Naive thymus-derived CD8-positive, alpha-beta T cell (primary cell): ENCODE measurements at regions of chr6 and their contacts with region 1.

Region 1: DNA sequence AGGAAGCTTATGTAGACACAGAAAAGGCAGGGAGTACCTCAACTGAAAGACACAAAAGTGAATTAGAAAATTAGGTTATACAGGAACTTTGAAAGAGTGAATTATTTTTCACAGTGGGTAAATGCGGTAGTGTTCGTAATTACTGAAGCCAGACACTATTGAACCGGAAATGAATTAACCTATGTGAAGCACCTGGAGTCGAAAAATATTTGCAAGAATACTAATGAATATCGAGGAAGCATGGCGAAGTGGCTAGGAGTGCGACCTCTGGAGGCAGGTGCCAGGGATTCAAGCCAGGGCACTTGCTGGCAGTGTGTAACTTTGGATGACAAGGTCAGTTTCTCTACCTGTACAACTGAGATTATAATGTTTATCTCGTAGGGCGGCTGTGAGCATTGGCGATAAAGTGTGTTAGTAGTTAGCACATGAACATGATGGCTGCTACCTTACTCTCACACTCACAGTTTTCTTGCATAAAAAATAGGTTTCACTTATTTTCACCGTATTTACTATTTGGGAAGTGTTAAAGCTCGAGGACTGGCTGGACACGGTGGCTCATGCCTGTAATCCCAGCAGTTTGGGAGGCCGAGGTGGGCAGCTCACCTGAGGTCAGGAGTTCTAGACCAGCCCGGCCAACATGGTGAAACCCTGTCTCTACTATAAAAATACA is 567 bp upstream of the SLC18B1 start:
- DNase-seq: peak; percentile 40 to 80 (median 66)
- ATAC-seq: peak; percentile 84 to 86
- H3K4me3 Mint-ChIP-seq: no peak overlapping the region
- H3K27ac Mint-ChIP-seq: no peak overlapping the region
- H3K4me1 Mint-ChIP-seq: peaks cover 6 to 43% (median 21%) of the 10 kb centered on the region in 4 donors
- H3K27me3 Mint-ChIP-seq: no peaks in the 10 kb centered on the region

Region 2: GRCh38 chr6:132512638-132513632 is 286.1 kb before region 1 on chr6 and contains the start of gene STX7:
- POLR2A ChIA-PET with region 1: interaction called, 10 read pairs
- DNase-seq: peak; percentile 79 to 92 (median 84)
- ATAC-seq: peak; percentile 92 to 94
- H3K4me3 Mint-ChIP-seq: peak within 1 kb of the TSS; percentile 93 to 99 (median 98)
- H3K27ac Mint-ChIP-seq: peak within 1 kb of the TSS; percentile 82 to 96 (median 94)
- H3K4me1 Mint-ChIP-seq: peaks cover 8 to 49% (median 38%) of the 10 kb centered on the region in 4 donors
- H3K27me3 Mint-ChIP-seq: peaks cover 0 to 3% (median 1%) of the 10 kb centered on the region in 5 donors
- polyA plus RNA-seq, gene STX7: 2.9 to 9.6 (median 6.5) TPM

Region 3: GRCh38 chr6:132768051-132768517 is 30.9 kb before region 1 on chr6:
- POLR2A ChIA-PET with region 1: interaction called, 26 read pairs
- DNase-seq: peak in 6 of 10 donors; percentile 3 to 59 (median 6)
- ATAC-seq: peak; percentile 43 to 46
- H3K4me3 Mint-ChIP-seq: no peak overlapping the region
- H3K27ac Mint-ChIP-seq: peak overlapping the region in 2 of 10 donors; percentile 4 to 24
- H3K4me1 Mint-ChIP-seq: peaks cover 4 to 22% (median 17%) of the 10 kb centered on the region in 4 donors
- H3K27me3 Mint-ChIP-seq: no peaks in the 10 kb centered on the region